ENCODE measurements at regions of chr2 and their contacts with region 1.

Region 1: DNA sequence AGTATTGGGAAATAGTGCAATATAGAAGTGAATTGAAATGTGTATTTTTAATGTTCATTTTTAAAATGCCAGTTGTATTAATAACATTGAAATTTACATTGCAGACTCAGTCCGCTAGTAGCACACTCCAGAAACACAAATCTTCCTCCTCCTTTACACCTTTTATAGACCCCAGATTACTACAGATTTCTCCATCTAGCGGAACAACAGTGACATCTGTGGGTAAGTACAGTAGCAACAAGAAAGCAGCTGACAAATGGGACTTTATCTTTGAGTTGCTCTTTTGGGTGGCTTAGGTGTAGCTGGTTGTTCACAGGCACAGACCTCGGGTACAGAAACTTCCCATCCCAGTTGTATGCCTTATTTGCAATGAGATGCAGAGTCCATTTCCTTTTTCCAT is 118.2 kb upstream of the IL1R2 start:
- DNase-seq: no peak
- H3K4me3 ChIP-seq: no peak overlapping the region
- H3K27ac ChIP-seq: peak overlapping the region in 18 of 59 donors; percentile 3 to 63 (median 17)
- H3K27me3 ChIP-seq: no peaks in the 10 kb centered on the region
- CTCF ChIP-seq: peak in 53 of 56 donors; percentile 14 to 64 (median 43)

Region 2: DNA sequence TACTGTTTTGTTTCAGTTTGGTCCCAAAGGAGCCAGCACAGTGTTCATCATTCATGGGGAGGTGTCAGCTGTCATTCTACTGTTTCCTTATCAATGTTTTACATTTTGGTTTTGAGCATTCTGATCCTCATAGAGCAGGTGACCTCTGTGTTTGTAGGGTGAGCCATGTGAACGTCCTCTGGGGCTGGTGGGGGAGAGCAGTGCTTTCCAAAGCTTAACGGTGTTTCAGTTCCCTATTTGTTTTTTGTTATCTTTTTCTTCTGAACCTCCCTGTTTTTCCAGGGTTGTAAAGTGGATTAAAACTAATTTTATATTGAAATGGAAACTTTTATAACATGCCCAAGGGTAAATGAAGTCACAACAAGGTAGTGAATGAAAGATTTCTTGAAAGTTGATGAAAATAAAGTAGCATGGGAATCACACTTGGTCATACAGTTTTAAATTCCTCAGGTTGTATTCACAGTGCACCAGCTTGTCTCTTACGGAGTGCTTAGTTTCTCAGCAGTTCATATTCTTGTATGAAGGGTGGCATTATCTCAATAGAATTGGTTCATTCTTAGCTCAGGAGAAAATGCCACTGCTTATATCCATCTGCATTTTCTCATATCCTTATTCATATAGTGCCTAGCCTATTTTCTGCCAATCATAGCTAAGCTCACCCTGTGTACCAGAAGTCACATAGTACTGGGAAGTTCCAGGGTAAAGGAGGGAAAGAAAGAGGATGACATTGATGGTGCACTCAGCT is 121.5 kb before region 1 on chr2:
- intact Hi-C with region 1: no loop called
- DNase-seq: no peak
- H3K4me3 ChIP-seq: peak overlapping the region in 35 of 59 donors; percentile 2 to 42 (median 20)
- H3K27ac ChIP-seq: peak overlapping the region; percentile 77 to 98 (median 93)
- H3K27me3 ChIP-seq: no peaks in the 10 kb centered on the region
- CTCF ChIP-seq: no peak

Region 3: DNA sequence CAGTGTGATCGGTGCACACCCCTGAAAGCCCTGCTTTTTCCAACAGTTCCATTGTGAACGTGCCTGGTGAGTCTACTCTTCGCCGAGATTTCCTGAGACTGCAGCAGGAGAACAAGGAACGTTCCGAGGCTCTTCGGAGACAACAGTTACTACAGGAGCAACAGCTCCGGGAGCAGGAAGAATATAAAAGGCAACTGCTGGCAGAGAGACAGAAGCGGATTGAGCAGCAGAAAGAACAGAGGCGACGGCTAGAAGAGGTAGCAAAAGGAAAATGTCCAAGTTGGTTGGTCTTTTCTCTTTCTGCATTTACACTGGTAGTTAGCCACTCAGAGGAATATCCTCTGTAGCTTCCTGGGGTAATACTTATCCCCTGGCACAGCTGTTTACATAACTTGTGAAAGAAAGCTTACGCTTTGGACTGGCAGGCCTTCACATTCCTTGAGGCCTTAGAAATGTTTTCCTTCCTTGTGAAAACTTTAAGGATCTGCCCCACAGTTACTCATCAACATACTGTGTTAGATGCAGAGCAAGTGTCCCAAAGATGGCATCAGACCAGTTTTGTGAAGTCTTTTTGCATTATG is 29.4 kb before region 1 on chr2:
- intact Hi-C with region 1: no loop called
- DNase-seq: peak in 1 of 10 donors; percentile 39
- H3K4me3 ChIP-seq: peak overlapping the region in 5 of 59 donors; percentile 3 to 27 (median 15)
- H3K27ac ChIP-seq: peak overlapping the region in 57 of 59 donors; percentile 2 to 85 (median 67)
- H3K27me3 ChIP-seq: no peaks in the 10 kb centered on the region
- CTCF ChIP-seq: no peak

Region 4: GRCh38 chr2:102235491-102235890 is 361.9 kb after region 1 on chr2:
- intact Hi-C with region 1: loop called in 1 of 2 experiments (anchors 10 kb)
- DNase-seq: no peak
- H3K4me3 ChIP-seq: no peak overlapping the region
- H3K27ac ChIP-seq: no peak overlapping the region
- H3K27me3 ChIP-seq: no peaks in the 10 kb centered on the region
- CTCF ChIP-seq: peak in 12 of 56 donors; percentile 7 to 35 (median 22)

Measured in dorsolateral prefrontal cortex (tissue), 120 donors.